MCF 10A (cell line): ENCODE measurements at regions of chr17 and their contacts with region 1.

Region 1: GRCh38 chr17:18183334-18184142 is at the start of gene ALKBH5:
- DNase-seq: peak; percentile 99
- H3K4me3 Mint-ChIP-seq: peak within 1 kb of the TSS; percentile 95
- H3K27ac Mint-ChIP-seq: peak within 1 kb of the TSS; percentile 92
- H3K4me1 Mint-ChIP-seq: peaks cover 30% of the 10 kb centered on the region
- H3K27me3 Mint-ChIP-seq: no peaks in the 10 kb centered on the region
- CTCF ChIP-seq: peak; percentile 21
- total RNA-seq, gene ALKBH5: 69.5 and 85.1 TPM in 2 replicates

Region 2: GRCh38 chr17:18153749-18154161 is 29.8 kb before region 1 on chr17:
- CTCF ChIA-PET with region 1: interaction called, 4 read pairs
- POLR2A ChIA-PET with region 1: interaction called, 11 read pairs
- intact Hi-C with region 1: no loop called
- DNase-seq: peak; percentile 89
- H3K4me3 Mint-ChIP-seq: peak overlapping the region; percentile 73
- H3K27ac Mint-ChIP-seq: peak overlapping the region; percentile 73
- H3K4me1 Mint-ChIP-seq: peaks cover 12% of the 10 kb centered on the region
- H3K27me3 Mint-ChIP-seq: no peaks in the 10 kb centered on the region
- CTCF ChIP-seq: no peak

Region 3: DNA sequence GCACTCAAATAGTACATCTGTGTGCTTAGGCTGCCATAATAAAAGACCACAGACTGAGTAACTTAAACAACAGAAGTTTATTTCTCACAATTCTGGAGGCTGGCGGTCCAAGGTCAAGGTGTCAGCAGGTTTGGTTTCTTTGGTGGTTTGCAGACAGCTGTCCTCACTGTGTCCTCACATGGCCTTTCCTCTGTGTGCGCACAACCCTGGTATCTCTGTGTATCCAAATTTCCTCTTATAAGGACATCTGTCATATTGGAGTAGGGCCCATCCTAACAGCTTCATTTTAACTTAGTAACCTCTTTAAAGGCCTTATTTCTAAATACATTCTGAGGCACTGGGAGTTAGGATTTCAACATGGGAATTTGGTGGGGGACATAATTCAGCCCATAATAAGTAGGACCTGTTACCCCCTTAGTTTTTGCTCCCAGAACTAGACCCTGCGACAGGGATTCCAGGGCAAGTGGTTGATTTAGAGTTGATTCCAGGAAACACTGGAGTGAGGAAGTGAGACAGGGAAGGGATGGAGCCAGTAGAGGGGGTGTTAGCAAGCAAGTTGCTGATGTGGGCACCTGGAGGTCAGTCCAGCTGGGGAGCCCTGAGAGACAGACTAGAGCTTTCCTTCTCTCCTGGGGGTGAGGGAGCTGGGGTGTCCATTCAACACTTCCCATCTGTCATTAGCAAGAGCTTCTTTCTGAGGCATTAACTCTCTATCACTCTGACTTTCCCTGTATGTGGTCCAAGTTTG is 10.8 kb before region 1 on chr17:
- CTCF ChIA-PET with region 1: no interaction called
- POLR2A ChIA-PET with region 1: interaction called, 17 read pairs
- intact Hi-C with region 1: no loop called
- DNase-seq: no peak
- H3K4me3 Mint-ChIP-seq: no peak overlapping the region
- H3K27ac Mint-ChIP-seq: no peak overlapping the region
- H3K4me1 Mint-ChIP-seq: no peaks in the 10 kb centered on the region
- H3K27me3 Mint-ChIP-seq: no peaks in the 10 kb centered on the region
- CTCF ChIP-seq: no peak